Cardiac septum (tissue), 1 donor: ENCODE measurements at regions of chr9 and their contacts with region 1.

Region 1: GRCh38 chr9:110058304-110058953 is 149.5 kb downstream of the C9orf152 start:
- DNase-seq: no peak

Region 2: GRCh38 chr9:110152704-110153374 is 94.4 kb after region 1 on chr9:
- intact Hi-C with region 1: loop called (anchors 5 kb)
- DNase-seq: no peak